ENCODE measurements at regions of chr2 and their contacts with region 1.

Region 1: DNA sequence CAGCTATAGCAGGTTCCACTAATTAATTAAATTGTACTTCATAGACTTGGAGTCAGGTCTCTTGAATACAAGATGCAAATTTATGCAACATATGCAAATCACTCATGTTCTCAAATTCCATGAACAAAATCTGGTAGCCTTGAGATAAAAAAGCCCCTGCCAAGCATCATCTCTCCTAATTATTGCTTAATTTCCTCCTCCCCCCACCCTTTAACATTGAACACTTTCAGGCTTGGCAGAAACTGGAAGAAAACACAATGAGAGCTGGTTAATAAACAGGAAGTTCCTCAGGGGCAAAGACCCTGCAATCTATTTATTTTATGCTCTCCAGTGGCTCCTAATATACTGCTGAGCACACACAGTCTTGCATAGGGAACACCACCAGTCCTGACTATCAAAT is 35.6 kb upstream of the ACVR1 start:
- DNase-seq: no peak
- H3K4me3 Mint-ChIP-seq: no peak overlapping the region
- H3K27ac Mint-ChIP-seq: no peak overlapping the region
- H3K4me1 Mint-ChIP-seq: no peaks in the 10 kb centered on the region
- H3K27me3 Mint-ChIP-seq: no peaks in the 10 kb centered on the region

Region 2: GRCh38 chr2:157990173-157990572 is 78.4 kb after region 1 on chr2:
- intact Hi-C with region 1: loop called (anchors 5 kb)
- DNase-seq: no peak
- H3K4me3 Mint-ChIP-seq: no peak overlapping the region
- H3K27ac Mint-ChIP-seq: no peak overlapping the region
- H3K4me1 Mint-ChIP-seq: no peaks in the 10 kb centered on the region
- H3K27me3 Mint-ChIP-seq: peaks cover 3% of the 10 kb centered on the region